Activated T-helper 1 cell treated with anti-CD3 and anti-CD28 coated beads, Interleukin-12 subunit alpha, Interleukin-12 subunit beta, Interleukin-2, Interleukin-4 antibody, amounts not matched to agents 30 ng/mL and 10 ng/mL and 1 ng/mL, durations not matched to agents 14 hours and 24 hours and 36 hours (primary cell): ENCODE measurements at regions of chr17 and their contacts with region 1.

Region 1: GRCh38 chr17:76466775-76467130 is 650 bp upstream of the AANAT start:
- DNase-seq: no peak
- H3K4me3 Mint-ChIP-seq: no peak overlapping the region
- H3K27ac Mint-ChIP-seq: no peak overlapping the region
- H3K4me1 Mint-ChIP-seq: peaks cover 9% of the 10 kb centered on the region
- H3K27me3 Mint-ChIP-seq: peaks cover under 1% of the 10 kb centered on the region

Region 2: GRCh38 chr17:76481071-76481655 is 14.4 kb after region 1 on chr17:
- intact Hi-C with region 1: no loop called
- DNase-seq: no peak
- H3K4me3 Mint-ChIP-seq: no peak overlapping the region
- H3K27ac Mint-ChIP-seq: no peak overlapping the region
- H3K4me1 Mint-ChIP-seq: peaks cover 11% of the 10 kb centered on the region
- H3K27me3 Mint-ChIP-seq: no peaks in the 10 kb centered on the region

Region 3: DNA sequence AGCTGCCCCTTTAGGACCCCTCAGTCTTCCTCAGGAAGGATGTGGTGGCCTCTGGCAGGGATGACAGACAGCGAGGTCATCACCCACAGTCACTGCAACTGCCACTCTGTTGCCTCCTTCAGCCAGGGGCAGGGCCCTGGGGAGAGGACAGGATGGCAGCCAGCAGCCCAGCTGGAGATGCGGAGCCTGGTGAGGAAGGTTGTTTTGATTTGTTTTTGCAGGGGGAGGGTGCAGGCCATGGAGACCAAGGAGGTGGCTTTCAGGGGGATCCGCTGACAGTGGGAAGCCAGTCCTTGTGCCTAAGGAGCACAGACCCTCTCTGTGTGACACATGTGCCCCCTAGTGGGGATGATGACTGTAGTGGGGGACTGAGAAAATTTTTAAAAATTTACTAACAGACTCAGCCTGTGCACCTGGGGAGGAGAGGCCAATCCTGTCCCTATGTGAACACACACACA is 80.5 kb after region 1 on chr17:
- intact Hi-C with region 1: loop called (anchors 1 kb)
- DNase-seq: peak; percentile 28
- H3K4me3 Mint-ChIP-seq: no peak overlapping the region
- H3K27ac Mint-ChIP-seq: no peak overlapping the region
- H3K4me1 Mint-ChIP-seq: peaks cover 5% of the 10 kb centered on the region
- H3K27me3 Mint-ChIP-seq: peaks cover 11% of the 10 kb centered on the region

Region 4: GRCh38 chr17:76623271-76624146 is 156.8 kb after region 1 on chr17:
- intact Hi-C with region 1: loop called (anchors 1 kb)
- DNase-seq: peak; percentile 59
- H3K4me3 Mint-ChIP-seq: no peak overlapping the region
- H3K27ac Mint-ChIP-seq: no peak overlapping the region
- H3K4me1 Mint-ChIP-seq: peaks cover 7% of the 10 kb centered on the region
- H3K27me3 Mint-ChIP-seq: peaks cover 12% of the 10 kb centered on the region